CD8-positive, alpha-beta T cell (primary cell): ENCODE measurements at regions of chr17 and their contacts with region 1.

Region 1: GRCh38 chr17:2929881-2930533 is 133.4 kb downstream of the OR1D5 start:
- DNase-seq: peak in 5 of 9 experiments; percentile 15 to 62 (median 35)
- ATAC-seq: no peak
- H3K4me3 ChIP-seq: no peak overlapping the region
- H3K4me3 Mint-ChIP-seq: no peak overlapping the region
- H3K27ac ChIP-seq: no peak overlapping the region
- H3K27ac Mint-ChIP-seq: no peak overlapping the region
- H3K4me1 ChIP-seq: peaks cover 7% of the 10 kb centered on the region
- H3K4me1 Mint-ChIP-seq: peaks cover 14% of the 10 kb centered on the region
- H3K27me3 ChIP-seq: no peaks in the 10 kb centered on the region
- H3K27me3 Mint-ChIP-seq: no peaks in the 10 kb centered on the region
- CTCF ChIP-seq: peak; percentile 48

Region 2: DNA sequence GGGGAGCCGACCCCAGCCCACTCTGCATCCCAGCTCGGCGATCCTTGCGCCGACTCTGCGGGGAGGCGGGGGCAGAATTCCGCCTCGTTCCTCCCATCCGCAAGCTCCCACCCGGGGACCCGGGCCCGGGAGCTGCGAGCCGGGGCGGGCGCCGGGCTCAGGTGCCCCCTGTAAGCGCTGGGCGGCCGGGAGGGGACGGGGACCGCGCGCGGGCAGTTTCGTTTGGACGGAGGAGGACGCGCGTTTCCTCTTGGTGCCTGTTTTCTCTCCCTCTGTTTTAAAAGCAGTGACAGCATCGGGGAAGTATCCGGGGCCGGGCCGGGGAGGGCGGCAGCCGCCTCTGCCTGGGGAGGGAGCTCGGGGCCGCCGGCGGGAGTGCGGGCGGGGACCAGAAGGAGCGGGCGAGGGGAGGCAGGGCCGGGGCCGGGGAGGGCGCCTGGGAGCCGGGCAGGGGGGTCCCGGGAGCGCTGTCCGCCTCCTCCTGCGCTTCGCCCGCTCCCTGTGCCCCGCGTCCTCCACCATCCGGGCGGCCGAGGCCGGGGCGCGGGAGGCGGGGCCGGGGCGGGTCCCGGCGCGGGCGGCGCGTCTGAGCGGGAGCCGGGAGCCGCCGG is 76.8 kb before region 1 on chr17:
- CTCF ChIA-PET with region 1: interaction called, 12 read pairs
- POLR2A ChIA-PET with region 1: no interaction called
- intact Hi-C with region 1: loop called in 1 of 2 experiments (anchors 1 kb)
- DNase-seq: peak in 7 of 9 experiments; percentile 9 to 58 (median 37)
- ATAC-seq: peak; percentile 35
- H3K4me3 ChIP-seq: peak overlapping the region; percentile 18 to 27
- H3K4me3 Mint-ChIP-seq: peak overlapping the region; percentile 61
- H3K27ac ChIP-seq: no peak overlapping the region
- H3K27ac Mint-ChIP-seq: no peak overlapping the region
- H3K4me1 ChIP-seq: peaks cover 12% of the 10 kb centered on the region
- H3K4me1 Mint-ChIP-seq: peaks cover 20% of the 10 kb centered on the region
- H3K27me3 ChIP-seq: peaks cover 4 to 12% of the 10 kb centered on the region in 2 experiments
- H3K27me3 Mint-ChIP-seq: peaks cover 43% of the 10 kb centered on the region
- CTCF ChIP-seq: no peak

Region 3: DNA sequence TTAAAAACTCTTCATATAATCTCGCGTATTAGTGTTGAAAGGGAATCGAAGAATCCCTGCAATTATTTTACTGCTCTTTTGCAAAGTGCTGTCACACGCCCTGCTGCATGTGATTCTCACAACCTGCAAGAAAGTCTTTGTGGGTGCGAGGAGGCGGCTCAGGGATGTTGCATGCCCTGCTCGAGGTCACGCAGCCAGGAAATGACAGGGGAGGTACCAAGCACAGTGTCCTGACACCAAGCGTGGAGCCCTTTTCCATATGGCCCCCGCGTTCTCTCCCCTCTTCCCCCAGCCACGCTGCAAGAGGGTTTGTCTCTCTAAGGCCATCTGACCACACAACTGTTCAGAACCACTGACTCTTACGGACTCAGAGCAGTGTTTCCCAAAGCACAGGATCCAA is 330.6 kb after region 1 on chr17:
- CTCF ChIA-PET with region 1: no interaction called
- POLR2A ChIA-PET with region 1: no interaction called
- intact Hi-C with region 1: no loop called
- DNase-seq: peak in 2 of 9 experiments; percentile 6 to 22
- ATAC-seq: no peak
- H3K4me3 ChIP-seq: no peak overlapping the region
- H3K4me3 Mint-ChIP-seq: no peak overlapping the region
- H3K27ac ChIP-seq: no peak overlapping the region
- H3K27ac Mint-ChIP-seq: no peak overlapping the region
- H3K4me1 ChIP-seq: no peaks in the 10 kb centered on the region
- H3K4me1 Mint-ChIP-seq: no peaks in the 10 kb centered on the region
- H3K27me3 ChIP-seq: no peaks in the 10 kb centered on the region
- H3K27me3 Mint-ChIP-seq: peaks cover 4% of the 10 kb centered on the region
- CTCF ChIP-seq: no peak